Mucosa of descending colon (tissue), 3 donors: ENCODE measurements at regions of chr2 and their contacts with region 1.

Region 1: GRCh38 chr2:156400706-156401678 is 35.2 kb upstream of the GPD2 start:
- DNase-seq: peak; percentile 73 to 85 (median 79)
- ATAC-seq: peak; percentile 83
- H3K4me3 ChIP-seq: peak overlapping the region; percentile 35
- H3K4me1 ChIP-seq: peaks cover 15% of the 10 kb centered on the region
- CTCF ChIP-seq: no peak

Region 2: GRCh38 chr2:156341452-156342253 is 59.3 kb before region 1 on chr2:
- intact Hi-C with region 1: loop called in 1 of 2 experiments (anchors 2 kb)
- DNase-seq: peak; percentile 92 to 96 (median 93)
- ATAC-seq: peak; percentile 83
- H3K4me3 ChIP-seq: peak overlapping the region; percentile 79
- H3K4me1 ChIP-seq: peaks cover 26% of the 10 kb centered on the region
- CTCF ChIP-seq: no peak

Region 3: GRCh38 chr2:156490466-156490840 is 89.5 kb after region 1 on chr2:
- intact Hi-C with region 1: no loop called
- DNase-seq: no peak
- ATAC-seq: no peak
- H3K4me3 ChIP-seq: no peak overlapping the region
- H3K4me1 ChIP-seq: no peaks in the 10 kb centered on the region
- CTCF ChIP-seq: no peak